ENCODE measurements at regions of chr17 and their contacts with region 1.

Region 1: DNA sequence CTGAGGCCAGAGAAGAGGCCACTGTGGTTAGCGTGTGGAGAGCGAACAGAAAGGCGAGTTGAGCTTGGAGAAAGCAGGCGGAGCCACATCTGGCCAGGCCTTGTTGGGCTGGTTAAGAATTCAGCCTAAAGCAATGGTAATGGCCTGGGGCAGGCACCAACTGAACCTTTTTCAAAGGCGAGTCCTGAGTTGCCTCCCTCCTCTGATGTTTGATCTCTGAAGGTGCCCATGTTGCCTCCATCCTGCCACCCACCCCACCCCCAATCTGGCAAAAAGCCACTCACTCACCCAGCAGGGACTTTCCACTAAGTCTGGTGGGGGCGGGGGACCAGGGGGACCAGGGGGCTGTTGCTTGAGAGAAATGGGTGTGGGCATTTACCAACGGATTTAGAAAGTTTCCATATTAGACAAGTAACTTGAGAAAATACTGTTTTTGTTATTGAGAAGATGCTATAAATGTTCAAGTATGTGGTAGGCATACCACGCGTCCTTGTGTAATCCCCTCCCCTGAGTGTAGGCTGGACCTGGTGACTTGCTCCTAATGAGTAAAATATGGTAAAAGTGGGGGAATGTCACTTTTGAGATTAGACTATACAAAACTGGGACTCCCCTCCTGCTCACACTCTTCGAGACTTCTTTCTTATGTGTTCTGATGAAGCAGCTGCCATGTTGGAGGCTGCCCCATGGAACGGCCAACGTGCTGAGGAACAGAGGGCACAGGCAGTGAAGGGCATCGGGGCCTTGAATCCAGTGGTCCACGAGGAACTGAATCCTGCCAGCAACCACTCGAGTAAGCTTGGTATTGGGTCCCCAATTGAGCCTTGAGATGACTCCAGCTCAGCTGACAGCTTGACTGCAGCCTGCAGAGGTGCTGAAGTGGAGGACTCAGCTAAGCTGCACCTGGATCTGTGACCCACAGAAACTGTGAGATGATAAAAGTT is 29.9 kb upstream of the TNS4 start:
- DNase-seq: peak; percentile 48 to 88 (median 61)
- ATAC-seq: peak; percentile 8 to 20
- H3K4me3 Mint-ChIP-seq: peak overlapping the region in 9 of 10 donors; percentile 29 to 65 (median 39)
- H3K27ac Mint-ChIP-seq: peak overlapping the region in 9 of 10 donors; percentile 18 to 96 (median 77)
- H3K4me1 Mint-ChIP-seq: peaks cover 34 to 78% (median 70%) of the 10 kb centered on the region in 4 donors
- H3K27me3 Mint-ChIP-seq: peaks cover 0 to 3% (median 0%) of the 10 kb centered on the region in 5 donors

Region 2: GRCh38 chr17:40417609-40418427 is 113.5 kb before region 1 on chr17 and contains the start of gene TOP2A:
- POLR2A ChIA-PET with region 1: interaction called, 20 read pairs
- DNase-seq: peak; percentile 70 to 100 (median 97)
- ATAC-seq: peak; percentile 98 to 100
- H3K4me3 Mint-ChIP-seq: peak within 1 kb of the TSS; percentile 85 to 97 (median 92)
- H3K27ac Mint-ChIP-seq: peak within 1 kb of the TSS; percentile 73 to 94 (median 88)
- H3K4me1 Mint-ChIP-seq: peaks cover 6 to 27% (median 19%) of the 10 kb centered on the region in 4 donors
- H3K27me3 Mint-ChIP-seq: peaks cover 0 to 4% (median 0%) of the 10 kb centered on the region in 5 donors
- polyA plus RNA-seq, gene TOP2A: 0.14 TPM in 1 of 3 donors, not detected in the others

Region 3: DNA sequence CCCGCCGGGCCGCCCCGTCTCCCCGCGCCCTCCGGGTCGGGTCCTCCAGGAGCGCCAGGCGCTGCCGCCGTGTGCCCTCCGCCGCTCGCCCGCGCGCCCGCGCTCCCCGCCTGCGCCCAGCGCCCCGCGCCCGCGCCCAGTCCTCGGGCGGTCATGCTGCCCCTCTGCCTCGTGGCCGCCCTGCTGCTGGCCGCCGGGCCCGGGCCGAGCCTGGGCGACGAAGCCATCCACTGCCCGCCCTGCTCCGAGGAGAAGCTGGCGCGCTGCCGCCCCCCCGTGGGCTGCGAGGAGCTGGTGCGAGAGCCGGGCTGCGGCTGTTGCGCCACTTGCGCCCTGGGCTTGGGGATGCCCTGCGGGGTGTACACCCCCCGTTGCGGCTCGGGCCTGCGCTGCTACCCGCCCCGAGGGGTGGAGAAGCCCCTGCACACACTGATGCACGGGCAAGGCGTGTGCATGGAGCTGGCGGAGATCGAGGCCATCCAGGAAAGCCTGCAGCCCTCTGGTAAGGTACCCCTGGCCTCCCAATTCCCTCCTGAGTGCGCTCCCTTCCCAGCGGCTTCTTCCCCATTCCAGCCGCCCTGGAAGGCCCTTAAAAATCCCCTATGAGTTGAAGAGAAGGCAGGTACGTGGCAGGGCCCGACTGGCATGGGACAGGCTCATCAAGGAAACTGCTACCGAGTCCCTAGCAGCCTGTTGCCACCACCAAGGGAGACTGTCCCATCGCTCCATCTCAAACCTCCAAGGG is 87.6 kb before region 1 on chr17:
- POLR2A ChIA-PET with region 1: interaction called, 21 read pairs
- DNase-seq: peak; percentile 30 to 79 (median 59)
- ATAC-seq: peak; percentile 84 to 89
- H3K4me3 Mint-ChIP-seq: peak overlapping the region; percentile 54 to 87 (median 84)
- H3K27ac Mint-ChIP-seq: peak overlapping the region in 6 of 10 donors; percentile 20 to 91 (median 54)
- H3K4me1 Mint-ChIP-seq: peaks cover 18 to 42% (median 30%) of the 10 kb centered on the region in 4 donors
- H3K27me3 Mint-ChIP-seq: peaks cover 0 to 26% (median 3%) of the 10 kb centered on the region in 5 donors

Region 4: GRCh38 chr17:40542558-40543411 is 11.5 kb after region 1 on chr17:
- POLR2A ChIA-PET with region 1: interaction called, 1,289 read pairs
- DNase-seq: peak in 3 of 10 donors; percentile 12 to 64 (median 47)
- ATAC-seq: no peak
- H3K4me3 Mint-ChIP-seq: peak overlapping the region; percentile 49 to 91 (median 77)
- H3K27ac Mint-ChIP-seq: peak overlapping the region; percentile 90 to 99 (median 96)
- H3K4me1 Mint-ChIP-seq: peaks cover 51 to 93% (median 87%) of the 10 kb centered on the region in 4 donors
- H3K27me3 Mint-ChIP-seq: peaks cover 0 to 2% (median 0%) of the 10 kb centered on the region in 5 donors